AG04450 (cell line): ENCODE measurements at regions of chr5 and their contacts with region 1.

Region 1: GRCh38 chr5:134184155-134185135 is 7.7 kb upstream of the SKP1 start:
- DNase-seq: no peak
- H3K4me3 ChIP-seq: no peak overlapping the region
- H3K27ac ChIP-seq: no peak overlapping the region
- H3K27me3 ChIP-seq: no peaks in the 10 kb centered on the region
- CTCF ChIP-seq: peak; percentile 97

Region 2: DNA sequence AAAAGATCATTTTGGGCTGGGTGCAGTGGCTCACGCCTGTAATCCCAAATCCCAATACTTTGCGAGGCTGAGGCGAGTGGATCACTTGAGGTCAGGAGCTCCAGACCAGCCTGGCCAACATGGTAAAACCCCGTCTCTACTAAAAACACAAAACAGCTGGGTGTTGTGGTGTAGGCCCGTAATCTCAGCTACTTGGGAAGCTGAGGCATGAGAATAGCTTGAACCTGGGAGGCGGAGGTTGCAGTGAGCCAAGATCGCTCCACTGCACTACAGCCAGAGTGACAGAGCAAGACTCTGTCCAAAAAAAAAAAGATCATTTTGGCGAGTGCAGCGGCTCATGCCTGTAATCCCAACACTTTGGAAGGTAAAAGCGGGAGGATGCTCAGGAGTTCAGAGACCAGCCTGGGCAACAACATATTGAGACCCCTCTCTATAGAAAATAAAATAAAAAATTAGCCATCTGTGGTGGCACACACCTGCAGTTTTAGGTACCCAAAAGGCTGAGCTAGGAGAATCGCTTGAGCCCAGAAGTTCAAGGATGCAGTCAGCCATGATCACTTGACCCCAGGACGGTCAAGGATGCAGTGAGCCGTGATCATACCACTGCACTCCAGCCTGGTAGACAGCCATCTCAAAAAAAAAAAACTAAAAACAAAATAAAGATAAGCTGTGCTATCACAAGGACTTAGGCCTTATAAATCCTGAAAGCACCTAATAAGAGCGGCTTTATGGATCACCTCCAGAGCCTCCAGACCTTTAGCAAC is 25.2 kb after region 1 on chr5:
- CTCF ChIA-PET with region 1: interaction called, 30 read pairs
- POLR2A ChIA-PET with region 1: no interaction called
- DNase-seq: no peak
- H3K4me3 ChIP-seq: no peak overlapping the region
- H3K27ac ChIP-seq: no peak overlapping the region
- H3K27me3 ChIP-seq: no peaks in the 10 kb centered on the region
- CTCF ChIP-seq: no peak

Region 3: DNA sequence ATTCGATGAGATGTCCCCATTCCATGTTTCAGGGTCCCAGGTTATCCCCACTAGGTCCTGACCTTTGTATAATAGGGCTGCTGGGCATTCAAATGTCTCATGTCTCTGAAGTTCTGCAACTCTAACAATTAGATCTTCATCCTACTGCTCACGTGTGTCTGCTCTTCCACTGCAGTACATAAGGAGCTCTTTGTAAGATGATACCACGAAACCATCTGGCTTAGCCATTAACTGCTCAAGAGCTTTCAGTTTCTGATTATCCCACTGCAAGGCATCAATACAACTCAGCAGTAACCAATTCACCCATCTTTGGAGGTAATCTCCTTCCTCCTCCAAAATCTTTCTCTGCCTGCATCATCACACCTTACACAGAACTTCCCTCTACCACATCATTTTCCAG is 91.4 kb after region 1 on chr5:
- CTCF ChIA-PET with region 1: interaction called, 10 read pairs
- POLR2A ChIA-PET with region 1: no interaction called
- DNase-seq: no peak
- H3K4me3 ChIP-seq: no peak overlapping the region
- H3K27ac ChIP-seq: no peak overlapping the region
- H3K27me3 ChIP-seq: no peaks in the 10 kb centered on the region
- CTCF ChIP-seq: no peak

Region 4: GRCh38 chr5:134289509-134290113 is 105.2 kb after region 1 on chr5:
- CTCF ChIA-PET with region 1: interaction called, 249 read pairs
- POLR2A ChIA-PET with region 1: interaction called, 4 read pairs
- DNase-seq: peak; percentile 65
- H3K4me3 ChIP-seq: no peak overlapping the region
- H3K27ac ChIP-seq: no peak overlapping the region
- H3K27me3 ChIP-seq: peaks cover 5% of the 10 kb centered on the region
- CTCF ChIP-seq: peak; percentile 78